ENCODE measurements at regions of chr2 and their contacts with region 1.

Region 1: GRCh38 chr2:170973492-170974303 is 44.6 kb downstream of the GORASP2 start:
- DNase-seq: peak; percentile 86 to 91
- ATAC-seq: peak; percentile 96 to 99 (median 98)
- H3K4me3 ChIP-seq: peak overlapping the region; percentile 91
- H3K27ac ChIP-seq: peak overlapping the region; percentile 65
- H3K4me1 ChIP-seq: no peaks in the 10 kb centered on the region
- H3K27me3 ChIP-seq: no peaks in the 10 kb centered on the region
- CTCF ChIP-seq: peak; percentile 97

Region 2: GRCh38 chr2:171136024-171136423 is 162.3 kb after region 1 on chr2:
- intact Hi-C with region 1: no loop called
- DNase-seq: no peak
- ATAC-seq: no peak
- H3K4me3 ChIP-seq: no peak overlapping the region
- H3K27ac ChIP-seq: no peak overlapping the region
- H3K4me1 ChIP-seq: peaks cover 23% of the 10 kb centered on the region
- H3K27me3 ChIP-seq: no peaks in the 10 kb centered on the region
- CTCF ChIP-seq: no peak

Region 3: DNA sequence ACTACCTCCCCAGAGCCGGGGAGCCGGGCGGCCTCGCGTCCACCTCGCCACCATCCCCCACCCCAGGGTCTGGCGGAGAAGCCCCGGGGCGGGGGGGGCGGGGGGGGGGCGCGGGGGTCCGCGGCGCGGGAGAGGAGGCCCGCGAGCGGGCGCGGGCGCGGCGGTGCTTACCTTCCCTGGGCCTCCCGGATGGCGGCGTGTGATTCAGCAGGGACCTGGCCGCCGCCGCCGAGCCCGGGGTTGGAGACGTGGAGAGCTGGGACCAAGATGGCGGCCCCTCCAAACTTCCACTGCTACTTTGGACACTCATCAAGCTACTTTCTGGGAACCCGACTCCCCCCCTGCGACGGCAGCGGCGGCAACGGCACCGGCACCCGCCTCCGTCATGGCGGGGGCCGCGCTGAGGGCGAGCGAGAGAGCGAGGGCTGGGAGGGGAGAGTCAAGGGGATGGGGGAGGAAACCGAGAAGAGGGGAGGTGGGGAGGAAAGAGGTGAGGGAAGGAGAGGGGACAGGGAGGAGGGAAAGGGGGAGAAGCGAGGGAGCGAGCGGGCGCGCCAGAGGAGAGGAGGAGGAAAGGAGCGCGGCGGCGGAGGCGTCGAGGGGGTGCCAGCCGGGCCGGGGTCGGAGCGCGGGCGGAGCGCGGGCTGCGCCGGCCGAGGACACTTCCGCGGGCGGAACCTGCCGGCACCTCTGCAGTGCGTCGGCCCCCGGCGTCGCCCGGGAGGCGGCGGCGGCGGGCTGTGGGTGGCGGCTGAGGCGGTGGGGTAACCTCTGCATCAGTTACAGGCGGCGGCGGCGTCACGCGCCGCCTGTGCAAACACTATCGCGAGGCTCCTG is 186.6 kb after region 1 on chr2 and contains the start of gene TLK1:
- intact Hi-C with region 1: loop called in 1 of 2 experiments (anchors 5 kb)
- DNase-seq: peak; percentile 77 to 86
- ATAC-seq: peak; percentile 82 to 89 (median 86)
- H3K4me3 ChIP-seq: peak within 1 kb of the TSS; percentile 82
- H3K27ac ChIP-seq: peak within 1 kb of the TSS; percentile 93
- H3K4me1 ChIP-seq: peaks cover 26% of the 10 kb centered on the region
- H3K27me3 ChIP-seq: no peaks in the 10 kb centered on the region
- CTCF ChIP-seq: no peak
- total RNA-seq, gene TLK1: 17.5 to 22.2 (median 20.6) TPM

Region 4: GRCh38 chr2:171416009-171416926 is 442.6 kb after region 1 on chr2:
- intact Hi-C with region 1: loop called (anchors 1 to 5 kb)
- DNase-seq: peak; percentile 79 to 88
- ATAC-seq: peak; percentile 97 to 100 (median 98)
- H3K4me3 ChIP-seq: no peak overlapping the region
- H3K27ac ChIP-seq: peak overlapping the region; percentile 48
- H3K4me1 ChIP-seq: peaks cover 5% of the 10 kb centered on the region
- H3K27me3 ChIP-seq: no peaks in the 10 kb centered on the region
- CTCF ChIP-seq: peak; percentile 80

Region 5: DNA sequence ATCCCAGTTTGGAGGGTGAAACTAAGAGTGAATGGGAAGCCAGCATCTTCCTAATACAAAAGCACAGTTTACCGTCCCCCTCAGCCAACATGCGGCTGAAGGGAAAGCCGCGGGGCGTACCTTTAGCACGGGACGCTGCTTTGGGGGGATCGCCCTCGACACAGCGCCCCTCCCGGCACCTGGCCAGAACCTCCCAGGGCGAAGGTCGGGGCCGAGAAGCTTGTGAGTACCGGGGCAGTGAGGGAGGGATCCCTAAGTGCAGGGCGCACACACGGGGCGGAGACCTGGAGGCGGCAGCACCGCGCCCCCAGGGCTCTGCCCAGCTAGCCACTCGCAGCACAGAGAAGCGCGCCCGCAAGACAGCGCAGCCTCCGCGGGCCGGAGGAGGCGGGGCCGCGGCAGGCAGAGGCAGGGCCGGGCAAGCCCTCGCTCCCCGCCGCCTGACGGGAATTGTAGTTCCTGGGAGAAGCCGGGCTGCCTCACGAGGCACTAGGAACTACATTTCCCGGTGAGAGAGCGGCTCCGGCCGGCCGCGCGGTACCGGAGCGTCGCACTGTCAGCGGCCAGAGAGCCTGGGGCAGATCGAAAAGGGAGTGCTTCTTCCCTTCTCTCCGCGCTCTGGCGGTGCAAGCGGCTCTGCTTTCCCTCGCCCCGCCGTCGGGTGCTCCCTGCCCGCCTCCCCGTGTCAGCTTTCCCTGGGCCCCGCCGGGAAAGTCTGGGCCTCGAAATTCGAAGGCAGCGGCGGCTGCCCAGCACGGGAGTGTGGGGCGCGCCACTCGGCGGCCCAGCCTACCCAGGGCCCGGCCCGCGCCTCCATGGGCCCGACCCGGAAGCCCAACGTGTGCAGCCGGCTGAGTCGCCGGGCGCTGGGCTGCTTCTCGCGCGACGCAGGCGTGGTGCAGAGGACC is 460.3 kb after region 1 on chr2 and contains the starts of genes DCAF17 and METTL8:
- intact Hi-C with region 1: loop called (anchors 5 kb)
- DNase-seq: peak; percentile 96 to 98
- ATAC-seq: peak; percentile 97 to 98 (median 98)
- H3K4me3 ChIP-seq: peak within 1 kb of the TSS; percentile 87
- H3K27ac ChIP-seq: peak within 1 kb of the TSS; percentile 98
- H3K4me1 ChIP-seq: peaks cover 13% of the 10 kb centered on the region
- H3K27me3 ChIP-seq: no peaks in the 10 kb centered on the region
- CTCF ChIP-seq: peak; percentile 22
- total RNA-seq, gene DCAF17: 7.1 to 10.8 (median 8.5) TPM
- total RNA-seq, gene METTL8: 8.0 to 15.5 (median 12.4) TPM

Measured in psoas muscle (tissue), 8 donors.